Sciatic nerve (tissue), 2 donors: ENCODE measurements at regions of chr11 and their contacts with region 1.

Region 1: DNA sequence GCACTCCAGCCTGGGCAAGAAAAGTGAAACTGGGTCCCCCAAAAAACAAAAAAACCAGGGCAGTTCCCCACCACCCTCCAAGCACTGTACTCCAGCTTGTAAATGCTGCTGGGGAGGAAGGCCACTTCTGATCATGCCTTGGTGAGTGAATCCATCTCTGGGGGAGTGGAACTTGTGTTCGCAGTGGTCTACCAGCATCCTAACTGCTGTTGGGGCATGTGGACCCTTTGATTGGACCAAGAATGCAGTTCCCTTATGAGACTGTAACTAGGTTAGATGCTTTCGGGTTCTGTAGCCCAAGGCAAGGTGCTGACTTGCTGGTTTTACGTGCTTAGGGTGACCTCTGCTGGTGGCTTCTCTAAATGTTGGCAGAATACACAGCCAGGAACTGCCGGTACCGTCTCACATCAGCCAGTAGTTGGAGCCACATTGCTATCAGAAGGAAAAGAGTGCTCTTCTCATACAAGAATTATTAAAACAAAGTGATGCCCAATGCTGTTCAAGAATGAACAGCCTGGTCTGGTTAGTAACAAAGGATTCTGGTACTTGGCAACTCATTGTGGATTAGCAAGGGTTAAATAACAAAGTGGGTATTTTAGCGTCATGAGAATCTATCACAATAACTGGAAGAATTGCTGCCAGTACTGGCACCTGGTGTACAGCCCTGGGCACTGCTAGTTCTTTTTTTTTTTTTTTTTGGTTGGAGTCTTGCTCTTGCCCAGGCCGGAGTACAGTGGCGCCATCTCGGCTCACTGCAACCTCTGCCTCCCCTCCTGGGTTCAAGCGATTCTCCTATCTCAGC is 13.0 kb downstream of the EIF1AD start:
- DNase-seq: peak; percentile 91
- ATAC-seq: peak; percentile 98

Region 2: DNA sequence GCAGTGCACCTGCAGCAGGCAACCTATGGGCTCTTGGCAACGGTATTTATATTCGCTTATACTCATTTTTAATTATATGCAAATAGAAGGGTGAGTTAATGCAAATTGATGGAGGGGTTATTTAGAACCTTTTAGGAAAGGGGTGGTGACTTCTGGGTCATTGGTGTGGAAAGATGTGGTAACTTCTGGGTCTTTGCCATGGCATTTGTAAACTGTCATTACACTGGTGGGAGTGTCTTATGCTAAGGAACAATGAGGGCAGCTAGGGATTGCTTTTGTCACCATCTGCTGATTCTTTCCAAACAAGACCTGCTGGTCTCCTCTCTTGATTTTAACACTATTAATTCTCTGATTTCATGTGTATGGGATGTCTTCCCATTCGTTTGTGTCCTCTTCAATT is 288.6 kb before region 1 on chr11:
- intact Hi-C with region 1: loop called (anchors 10 kb)
- DNase-seq: no peak
- ATAC-seq: no peak

Region 3: DNA sequence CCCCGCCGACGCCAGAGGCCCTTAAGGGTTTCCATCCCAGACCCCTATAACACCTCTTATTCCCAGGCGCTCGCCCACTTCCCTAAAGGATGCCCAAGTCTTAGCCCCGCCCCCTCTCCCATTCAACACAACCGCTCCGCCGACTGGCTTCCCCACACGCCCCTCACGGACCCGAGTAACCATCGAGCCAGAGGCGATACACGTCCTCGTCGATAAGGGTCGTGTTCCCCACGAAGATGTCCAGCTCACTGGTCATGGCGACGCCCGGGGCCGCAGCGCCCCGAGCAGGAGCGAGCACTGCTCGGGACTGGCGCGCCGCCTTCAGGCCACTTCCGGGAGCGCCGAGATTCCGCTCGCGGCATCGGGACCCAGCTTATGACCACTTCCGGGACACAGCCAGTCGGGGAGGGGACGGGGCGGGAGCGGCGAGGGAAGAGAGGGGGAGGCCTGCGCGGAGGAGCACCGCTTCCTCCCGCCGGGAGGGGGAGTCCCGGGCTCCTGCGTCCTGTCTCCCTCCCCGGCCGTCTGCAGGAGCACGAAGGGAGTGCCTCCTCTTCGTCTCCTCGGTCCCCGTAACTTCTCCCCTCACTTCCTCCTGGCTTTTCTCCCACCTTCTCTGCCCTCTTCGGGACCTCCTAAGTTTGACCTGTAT is 100.7 kb before region 1 on chr11 and contains the start of gene FIBP:
- intact Hi-C with region 1: loop called (anchors 10 kb)
- DNase-seq: peak; percentile 98
- ATAC-seq: peak; percentile 91
- total RNA-seq, gene FIBP: 37.2 TPM

Region 4: GRCh38 chr11:67178878-67179277 is 1189.9 kb after region 1 on chr11:
- intact Hi-C with region 1: no loop called
- DNase-seq: no peak
- ATAC-seq: no peak